Calu3 (cell line): ENCODE measurements at regions of chr13 and their contacts with region 1.

Region 1: GRCh38 chr13:80235166-80235966 is 105.6 kb downstream of the SPRY2 start:
- DNase-seq: peak; percentile 1
- H3K4me3 Mint-ChIP-seq: peak overlapping the region; percentile 30
- H3K27ac Mint-ChIP-seq: no peak overlapping the region
- H3K4me1 Mint-ChIP-seq: peaks cover 18% of the 10 kb centered on the region
- H3K27me3 Mint-ChIP-seq: no peaks in the 10 kb centered on the region
- CTCF ChIP-seq: no peak

Region 2: GRCh38 chr13:79405498-79405828 is 829.9 kb before region 1 on chr13:
- CTCF ChIA-PET with region 1: no interaction called
- intact Hi-C with region 1: no loop called
- DNase-seq: no peak
- H3K4me3 Mint-ChIP-seq: no peak overlapping the region
- H3K27ac Mint-ChIP-seq: no peak overlapping the region
- H3K4me1 Mint-ChIP-seq: peaks cover 23% of the 10 kb centered on the region
- H3K27me3 Mint-ChIP-seq: no peaks in the 10 kb centered on the region
- CTCF ChIP-seq: no peak

Region 3: GRCh38 chr13:79775830-79776229 is 459.5 kb before region 1 on chr13:
- CTCF ChIA-PET with region 1: no interaction called
- intact Hi-C with region 1: loop called (anchors 10 kb)
- DNase-seq: peak; percentile 12
- H3K4me3 Mint-ChIP-seq: no peak overlapping the region
- H3K27ac Mint-ChIP-seq: no peak overlapping the region
- H3K4me1 Mint-ChIP-seq: no peaks in the 10 kb centered on the region
- H3K27me3 Mint-ChIP-seq: no peaks in the 10 kb centered on the region
- CTCF ChIP-seq: no peak

Region 4: DNA sequence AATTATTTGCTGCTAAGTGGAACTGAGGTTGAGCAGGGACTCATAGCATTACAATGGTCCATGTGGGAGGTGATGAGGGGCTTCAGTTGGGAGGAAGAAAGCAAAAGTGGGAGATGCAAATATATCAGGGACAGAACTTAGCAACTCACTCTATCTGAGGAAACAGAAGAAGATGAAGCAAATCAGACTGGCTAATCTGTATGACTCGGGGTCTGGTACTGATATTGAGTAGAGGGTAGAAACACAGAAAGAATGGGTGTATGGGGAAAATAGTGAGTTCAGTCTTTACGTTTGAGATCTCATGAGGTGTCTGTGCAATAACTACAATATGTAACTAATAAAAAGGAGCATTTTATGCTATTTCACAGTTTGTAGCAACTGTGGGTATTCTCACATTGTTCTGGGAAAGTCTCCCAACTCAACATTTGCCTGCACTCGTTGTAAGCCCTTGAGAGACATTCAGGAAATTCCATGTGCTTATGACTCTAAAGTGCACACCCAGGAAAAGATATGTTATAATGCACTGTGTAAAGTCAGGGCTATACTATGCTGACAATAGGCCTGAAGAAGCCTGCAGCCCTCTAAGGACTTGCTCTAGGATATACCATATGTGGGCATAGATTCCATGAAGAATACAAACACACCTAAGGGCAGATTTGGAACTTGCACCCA is 78.0 kb before region 1 on chr13:
- CTCF ChIA-PET with region 1: no interaction called
- intact Hi-C with region 1: no loop called
- DNase-seq: no peak
- H3K4me3 Mint-ChIP-seq: no peak overlapping the region
- H3K27ac Mint-ChIP-seq: no peak overlapping the region
- H3K4me1 Mint-ChIP-seq: no peaks in the 10 kb centered on the region
- H3K27me3 Mint-ChIP-seq: no peaks in the 10 kb centered on the region
- CTCF ChIP-seq: no peak

Region 5: DNA sequence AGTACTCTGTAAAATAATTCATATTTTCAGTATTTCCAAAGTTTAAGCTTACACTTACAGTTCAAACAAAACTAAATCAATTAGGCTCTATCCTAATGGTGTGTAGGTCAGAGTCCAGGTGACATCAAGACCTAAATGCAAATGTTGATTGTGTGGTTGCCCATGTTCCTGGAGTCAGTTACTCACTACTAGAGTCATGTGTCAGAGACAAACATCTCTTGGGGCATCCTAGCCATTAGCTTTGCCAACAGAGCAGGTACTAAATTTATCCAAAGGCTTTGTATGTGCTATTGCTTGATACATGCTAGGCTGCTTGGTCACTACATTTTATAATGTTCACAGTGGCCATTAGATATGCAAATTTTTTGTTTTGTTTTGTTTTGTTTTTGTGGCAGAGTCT is 93.9 kb after region 1 on chr13:
- CTCF ChIA-PET with region 1: no interaction called
- intact Hi-C with region 1: no loop called
- DNase-seq: no peak
- H3K4me3 Mint-ChIP-seq: no peak overlapping the region
- H3K27ac Mint-ChIP-seq: no peak overlapping the region
- H3K4me1 Mint-ChIP-seq: no peaks in the 10 kb centered on the region
- H3K27me3 Mint-ChIP-seq: no peaks in the 10 kb centered on the region
- CTCF ChIP-seq: no peak